GM13976 (cell line): ENCODE measurements at regions of chr10 and their contacts with region 1.

Region 1: DNA sequence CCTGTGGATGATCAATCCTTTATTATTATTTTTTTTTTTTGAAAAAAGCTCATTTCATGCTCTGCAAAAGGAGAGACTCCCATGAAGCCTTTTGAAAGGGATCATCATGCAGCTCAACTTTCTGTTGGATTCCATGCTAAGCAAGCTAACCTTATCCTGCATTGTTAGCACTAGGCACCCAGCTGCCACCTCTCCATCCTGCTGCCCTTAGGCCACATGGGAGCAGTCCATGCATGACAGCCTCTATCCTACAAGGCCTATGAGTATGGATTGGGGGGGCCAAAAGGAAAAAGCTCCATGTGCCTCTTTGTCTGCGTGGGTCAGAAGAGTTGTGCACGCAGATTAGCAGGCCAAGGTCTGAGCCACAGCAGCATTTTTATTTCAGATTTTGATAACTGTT is 19.2 kb downstream of the SMNDC1 start:
- DNase-seq: no peak
- CTCF ChIP-seq: no peak

Region 2: GRCh38 chr10:109883859-109884771 is 401.4 kb before region 1 on chr10:
- in situ Hi-C with region 1: loop called (anchors 10 kb)
- DNase-seq: peak; percentile 79
- CTCF ChIP-seq: peak; percentile 89

Region 3: DNA sequence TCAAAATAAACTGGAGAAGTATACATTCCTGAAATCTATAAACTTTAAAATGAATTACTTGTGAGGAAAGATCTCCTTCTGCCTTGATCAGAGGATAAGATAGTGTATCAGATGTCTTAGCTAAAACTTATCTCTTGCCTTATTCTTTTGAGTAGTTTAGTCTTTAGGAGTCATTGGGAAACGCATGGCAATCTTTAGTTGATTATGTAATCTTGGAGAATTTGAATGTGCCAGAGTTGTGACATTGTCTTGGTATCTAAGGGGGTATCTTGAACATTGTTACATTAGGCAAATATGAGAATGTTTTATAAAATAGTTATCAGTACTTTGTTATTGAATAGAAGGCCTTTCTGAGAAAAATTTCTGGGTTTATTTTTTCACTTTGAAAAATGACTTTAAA is 729.7 kb after region 1 on chr10:
- in situ Hi-C with region 1: no loop called
- DNase-seq: no peak
- CTCF ChIP-seq: no peak